Activated CD4-positive, alpha-beta T cell treated with anti-CD3 and anti-CD28 coated beads, Interleukin-2, amount 10 ng/mL, durations not matched to agents 24 days and 14 days (primary cell): ENCODE measurements at regions of chr2 and their contacts with region 1.

Region 1: GRCh38 chr2:233053928-233054784 is 6.0 kb upstream of the INPP5D start:
- DNase-seq: peak; percentile 91
- H3K4me3 Mint-ChIP-seq: no peak overlapping the region
- H3K27ac Mint-ChIP-seq: no peak overlapping the region
- H3K4me1 Mint-ChIP-seq: peaks cover 6% of the 10 kb centered on the region
- H3K27me3 Mint-ChIP-seq: peaks cover 32% of the 10 kb centered on the region

Region 2: GRCh38 chr2:232611551-232612218 is 442.5 kb before region 1 on chr2:
- intact Hi-C with region 1: loop called (anchors 5 kb)
- DNase-seq: peak; percentile 91
- H3K4me3 Mint-ChIP-seq: no peak overlapping the region
- H3K27ac Mint-ChIP-seq: no peak overlapping the region
- H3K4me1 Mint-ChIP-seq: no peaks in the 10 kb centered on the region
- H3K27me3 Mint-ChIP-seq: peaks cover 5% of the 10 kb centered on the region

Region 3: DNA sequence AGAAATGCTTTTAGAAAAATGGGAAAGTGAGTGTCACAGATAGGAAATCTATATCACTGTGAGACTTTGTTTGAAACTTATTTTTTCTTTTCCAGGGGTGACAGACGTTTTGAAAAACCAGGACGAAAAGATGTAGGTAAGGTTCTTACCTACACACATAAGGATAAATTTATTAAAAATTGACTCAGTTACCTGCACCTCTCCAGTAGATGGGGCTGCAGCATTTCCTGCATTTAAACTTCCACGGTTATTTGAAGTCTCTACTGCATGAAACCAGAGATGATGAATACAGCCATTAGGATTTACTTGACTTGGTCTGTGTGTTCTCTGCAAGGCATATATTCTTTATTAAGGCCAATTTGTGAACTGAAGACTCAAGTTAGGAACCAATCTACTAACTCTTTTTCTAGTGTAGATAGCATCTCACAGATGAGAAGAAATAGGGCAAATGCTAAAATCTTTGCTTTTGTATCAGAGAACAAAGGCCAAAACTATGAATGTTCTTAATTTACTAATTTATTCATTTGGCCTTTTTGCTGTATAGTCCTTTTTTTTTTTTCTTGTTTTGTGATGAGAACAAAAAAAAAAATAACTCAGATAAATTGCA is 292.8 kb before region 1 on chr2:
- intact Hi-C with region 1: loop called (anchors 10 kb)
- DNase-seq: peak; percentile 82
- H3K4me3 Mint-ChIP-seq: no peak overlapping the region
- H3K27ac Mint-ChIP-seq: no peak overlapping the region
- H3K4me1 Mint-ChIP-seq: peaks cover 15% of the 10 kb centered on the region
- H3K27me3 Mint-ChIP-seq: no peaks in the 10 kb centered on the region

Region 4: DNA sequence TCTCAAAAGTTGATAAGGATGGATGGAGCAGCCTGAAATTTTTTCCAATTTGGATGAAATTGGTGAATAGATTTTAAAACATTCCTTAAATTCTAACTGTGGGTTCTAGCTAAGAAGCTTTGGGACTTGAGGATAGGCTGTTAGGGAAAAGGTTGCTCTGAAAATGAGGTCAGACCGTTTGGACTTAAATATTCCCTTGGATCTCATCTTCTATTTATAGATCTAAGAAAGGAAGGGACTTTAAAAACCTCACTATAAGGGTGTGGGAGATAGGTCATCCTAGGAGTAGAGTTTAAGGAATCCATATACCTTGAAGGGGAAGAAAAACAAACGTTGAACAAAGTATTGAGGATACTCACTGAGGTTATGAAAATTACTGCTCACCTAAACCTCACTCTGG is 201.5 kb before region 1 on chr2:
- intact Hi-C with region 1: loop called (anchors 1 kb)
- DNase-seq: no peak
- H3K4me3 Mint-ChIP-seq: no peak overlapping the region
- H3K27ac Mint-ChIP-seq: peak overlapping the region; percentile 22
- H3K4me1 Mint-ChIP-seq: peaks cover 4% of the 10 kb centered on the region
- H3K27me3 Mint-ChIP-seq: no peaks in the 10 kb centered on the region

Region 5: GRCh38 chr2:232999354-232999753 is 54.8 kb before region 1 on chr2:
- intact Hi-C with region 1: no loop called
- DNase-seq: no peak
- H3K4me3 Mint-ChIP-seq: no peak overlapping the region
- H3K27ac Mint-ChIP-seq: no peak overlapping the region
- H3K4me1 Mint-ChIP-seq: no peaks in the 10 kb centered on the region
- H3K27me3 Mint-ChIP-seq: peaks cover 2% of the 10 kb centered on the region